WTC11 (cell line): ENCODE measurements at regions of chr7 and their contacts with region 1.

Region 1: DNA sequence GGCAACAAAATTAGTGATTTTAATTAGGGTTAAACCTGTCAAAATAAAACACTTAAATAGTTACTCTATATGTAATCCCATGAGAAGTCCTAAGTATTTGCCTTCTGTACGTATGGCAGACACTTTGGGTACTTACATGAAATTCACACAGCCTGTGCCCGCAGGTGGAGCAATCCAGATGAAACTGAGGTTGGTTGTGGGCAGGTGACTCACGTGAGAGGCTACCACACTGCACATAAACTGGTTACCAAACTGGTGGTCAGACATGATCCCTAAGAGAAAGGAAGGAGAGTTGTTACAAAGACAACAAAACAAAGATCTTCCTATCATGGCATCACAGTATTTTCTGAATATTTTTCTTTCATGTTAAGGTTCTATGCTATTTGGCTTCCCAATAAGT is 156.1 kb downstream of the RELN start:
- DNase-seq: no peak
- ATAC-seq: no peak
- H3K4me3 Mint-ChIP-seq: no peak overlapping the region
- H3K27ac Mint-ChIP-seq: no peak overlapping the region
- H3K4me1 Mint-ChIP-seq: no peaks in the 10 kb centered on the region
- H3K27me3 Mint-ChIP-seq: no peaks in the 10 kb centered on the region; the same call in 1 of the 2 replicates
- CTCF ChIP-seq: no peak

Region 2: GRCh38 chr7:103795787-103796186 is 37.6 kb before region 1 on chr7:
- CTCF ChIA-PET with region 1: no interaction called
- POLR2A ChIA-PET with region 1: no interaction called
- DNase-seq: no peak
- ATAC-seq: no peak
- H3K4me3 Mint-ChIP-seq: no peak overlapping the region
- H3K27ac Mint-ChIP-seq: no peak overlapping the region
- H3K4me1 Mint-ChIP-seq: peaks cover 8% of the 10 kb centered on the region
- H3K27me3 Mint-ChIP-seq: peaks cover 4% of the 10 kb centered on the region
- CTCF ChIP-seq: no peak

Region 3: GRCh38 chr7:104106108-104106905 is 272.9 kb after region 1 on chr7:
- CTCF ChIA-PET with region 1: no interaction called
- POLR2A ChIA-PET with region 1: interaction called, 10 read pairs
- DNase-seq: no peak
- ATAC-seq: no peak
- H3K4me3 Mint-ChIP-seq: no peak overlapping the region
- H3K27ac Mint-ChIP-seq: no peak overlapping the region
- H3K4me1 Mint-ChIP-seq: peaks cover 6% of the 10 kb centered on the region
- H3K27me3 Mint-ChIP-seq: no peaks in the 10 kb centered on the region
- CTCF ChIP-seq: no peak